Cardiac septum (tissue), 1 donor: ENCODE measurements at regions of chr12 and their contacts with region 1.

Region 1: GRCh38 chr12:21657326-21658077 is at the start of gene LDHB:
- DNase-seq: peak; percentile 97
- total RNA-seq, gene LDHB: 1,416 TPM

Region 2: DNA sequence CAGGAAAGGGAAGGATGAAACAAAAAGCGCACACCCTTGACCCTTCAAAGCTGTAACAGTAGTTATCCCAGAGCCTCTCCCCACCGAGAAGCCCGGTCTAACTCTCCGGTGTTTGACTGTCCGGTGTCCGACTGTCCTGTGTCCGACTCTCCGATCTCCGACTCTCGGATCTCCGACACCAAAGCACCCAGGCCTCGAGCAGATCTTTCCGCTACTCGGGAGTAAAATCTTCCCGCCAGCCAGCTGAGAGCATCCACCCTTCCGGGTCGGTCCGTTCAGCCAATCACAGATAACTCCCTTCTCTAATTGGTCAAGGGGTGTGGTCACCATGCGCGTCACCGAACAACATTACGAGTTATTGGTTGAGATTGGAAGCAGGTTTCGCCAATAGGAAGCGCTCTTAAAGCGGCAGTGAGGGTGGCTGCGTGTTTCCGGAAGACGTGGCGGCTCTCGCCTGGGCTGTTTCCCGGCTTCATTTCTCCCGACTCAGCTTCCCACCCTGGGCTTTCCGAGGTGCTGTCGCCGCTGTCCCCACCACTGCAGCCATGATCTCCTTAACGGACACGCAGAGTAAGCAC is 156.0 kb before region 1 on chr12 and contains the starts of genes GOLT1B and RECQL:
- intact Hi-C with region 1: loop called (anchors 5 kb)
- DNase-seq: peak; percentile 96
- total RNA-seq, gene GOLT1B: 26.6 TPM
- total RNA-seq, gene RECQL: 22.3 TPM

Region 3: DNA sequence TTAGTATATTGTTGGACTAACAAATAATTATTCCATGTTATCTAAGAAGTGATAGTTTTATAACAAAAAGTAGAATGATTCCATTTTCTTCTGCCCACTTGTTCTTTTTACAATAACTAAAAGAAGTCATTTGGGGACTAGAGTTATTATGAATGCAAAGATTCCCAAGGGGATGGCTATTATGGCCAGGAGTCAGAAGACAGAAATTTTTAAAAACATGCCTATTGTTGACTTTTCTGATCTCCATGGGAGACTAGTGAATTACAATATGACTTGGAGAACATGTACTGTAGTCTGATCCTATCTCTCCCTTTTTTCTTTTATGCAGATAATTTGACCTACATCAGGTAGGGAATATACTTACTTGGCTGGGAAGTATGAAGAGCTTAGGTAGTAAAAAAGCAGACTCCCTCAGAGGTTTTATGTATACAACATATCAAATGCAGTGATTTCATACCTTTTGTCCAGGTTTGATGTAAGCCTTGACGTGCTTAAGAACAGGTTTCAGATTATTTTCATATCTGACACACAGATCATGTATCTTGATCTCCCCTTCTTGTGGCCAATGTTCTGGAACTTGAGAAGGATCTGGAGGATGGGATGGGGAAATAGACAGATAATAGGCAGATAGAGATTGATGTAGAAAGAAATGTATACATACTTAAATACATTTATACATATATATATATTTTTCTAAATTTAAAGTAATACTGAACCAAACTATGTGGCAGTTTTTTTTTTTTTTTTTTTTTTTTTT is 158.0 kb after region 1 on chr12:
- intact Hi-C with region 1: no loop called
- DNase-seq: no peak